ENCODE measurements at regions of chr20 and their contacts with region 1.

Region 1: GRCh38 chr20:17938871-17939619 is 29.5 kb downstream of the SNX5 start:
- DNase-seq: peak; percentile 82
- H3K4me3 ChIP-seq: no peak overlapping the region
- H3K27ac ChIP-seq: peak overlapping the region in 3 of 4 donors; percentile 70 to 81 (median 75)
- H3K4me1 ChIP-seq: peaks cover 0 to 43% (median 39%) of the 10 kb centered on the region in 4 donors
- H3K27me3 ChIP-seq: no peaks in the 10 kb centered on the region
- CTCF ChIP-seq: peak; percentile 62 to 91 (median 77)
- EP300 ChIP-seq: no peak
- POLR2A ChIP-seq: no peak

Region 2: DNA sequence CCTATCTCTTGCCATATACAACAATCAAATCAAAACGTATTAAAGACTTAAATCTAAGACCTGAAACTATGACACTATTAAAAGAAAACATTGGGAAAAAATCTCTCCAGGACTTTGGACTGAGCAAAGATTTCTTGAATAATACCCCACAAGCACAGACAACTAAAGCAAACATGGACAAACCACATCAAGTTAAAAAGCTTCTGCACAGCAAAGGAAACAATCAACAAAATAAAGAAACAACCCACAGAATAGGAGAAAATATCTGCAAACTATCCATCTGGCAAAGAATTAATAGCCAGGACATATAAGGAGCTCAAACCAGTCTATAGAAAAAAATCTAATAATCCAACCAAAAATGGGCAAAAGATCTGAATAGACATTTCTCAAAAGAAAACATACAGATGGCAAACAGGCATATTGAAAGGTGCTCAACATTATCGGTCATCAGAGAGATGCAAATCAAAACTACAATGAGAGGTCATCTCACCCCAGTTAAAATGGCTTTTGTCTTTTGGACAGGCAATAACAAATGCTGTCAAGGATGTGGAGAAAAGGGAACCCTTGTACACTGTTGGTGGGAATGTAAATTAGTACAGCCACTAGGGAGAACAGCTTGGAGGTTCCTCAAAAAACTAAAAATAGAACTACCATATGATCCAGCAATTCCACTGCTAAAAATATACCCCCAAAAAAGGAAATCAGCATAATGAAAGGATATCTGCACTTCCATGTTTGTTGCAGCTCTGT is 46.7 kb before region 1 on chr20:
- intact Hi-C with region 1: no loop called
- DNase-seq: no peak
- H3K4me3 ChIP-seq: no peak overlapping the region
- H3K27ac ChIP-seq: peak overlapping the region in 1 of 4 donors; percentile 35
- H3K4me1 ChIP-seq: peaks cover 0 to 30% (median 21%) of the 10 kb centered on the region in 4 donors
- H3K27me3 ChIP-seq: no peaks in the 10 kb centered on the region
- CTCF ChIP-seq: no peak
- EP300 ChIP-seq: peak in 1 of 4 donors; percentile 35
- POLR2A ChIP-seq: no peak

Region 3: DNA sequence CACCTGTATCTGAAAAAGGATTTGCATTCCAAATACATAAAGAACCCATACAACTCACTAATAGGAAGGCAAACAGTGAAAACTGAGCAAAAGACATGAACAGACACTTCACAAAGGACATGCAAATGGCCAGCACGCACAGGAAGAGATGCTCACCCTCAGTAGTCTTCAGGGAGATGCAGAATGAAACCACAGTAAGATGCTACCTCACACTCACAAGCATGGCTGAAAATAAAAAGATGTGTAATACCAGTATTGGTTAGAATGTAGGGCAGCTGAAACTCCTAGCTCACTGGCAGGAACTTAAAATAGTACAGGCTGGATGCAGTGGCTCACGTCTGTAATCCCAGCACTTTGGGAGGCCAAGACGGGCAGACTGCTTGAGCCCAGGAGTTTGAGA is 35.0 kb before region 1 on chr20:
- intact Hi-C with region 1: loop called (anchors 5 kb)
- DNase-seq: no peak
- H3K4me3 ChIP-seq: no peak overlapping the region
- H3K27ac ChIP-seq: no peak overlapping the region
- H3K4me1 ChIP-seq: no peaks in the 10 kb centered on the region
- H3K27me3 ChIP-seq: no peaks in the 10 kb centered on the region
- CTCF ChIP-seq: no peak
- EP300 ChIP-seq: no peak
- POLR2A ChIP-seq: no peak

Measured in sigmoid colon (tissue), 7 donors.